Pancreas (tissue), 10 donors: ENCODE measurements at regions of chr12 and their contacts with region 1.

Region 1: GRCh38 chr12:54993161-54993835 is 8.7 kb upstream of the TESPA1 start:
- DNase-seq: peak in 4 of 6 donors; percentile 17 to 61 (median 28)
- ATAC-seq: peak; percentile 76 to 94 (median 88)
- H3K4me3 ChIP-seq: no peak overlapping the region
- H3K27ac ChIP-seq: no peak overlapping the region
- H3K4me1 ChIP-seq: no peaks in the 10 kb centered on the region
- H3K27me3 ChIP-seq: no peaks in the 10 kb centered on the region
- CTCF ChIP-seq: peak; percentile 71 to 87 (median 82)

Region 2: DNA sequence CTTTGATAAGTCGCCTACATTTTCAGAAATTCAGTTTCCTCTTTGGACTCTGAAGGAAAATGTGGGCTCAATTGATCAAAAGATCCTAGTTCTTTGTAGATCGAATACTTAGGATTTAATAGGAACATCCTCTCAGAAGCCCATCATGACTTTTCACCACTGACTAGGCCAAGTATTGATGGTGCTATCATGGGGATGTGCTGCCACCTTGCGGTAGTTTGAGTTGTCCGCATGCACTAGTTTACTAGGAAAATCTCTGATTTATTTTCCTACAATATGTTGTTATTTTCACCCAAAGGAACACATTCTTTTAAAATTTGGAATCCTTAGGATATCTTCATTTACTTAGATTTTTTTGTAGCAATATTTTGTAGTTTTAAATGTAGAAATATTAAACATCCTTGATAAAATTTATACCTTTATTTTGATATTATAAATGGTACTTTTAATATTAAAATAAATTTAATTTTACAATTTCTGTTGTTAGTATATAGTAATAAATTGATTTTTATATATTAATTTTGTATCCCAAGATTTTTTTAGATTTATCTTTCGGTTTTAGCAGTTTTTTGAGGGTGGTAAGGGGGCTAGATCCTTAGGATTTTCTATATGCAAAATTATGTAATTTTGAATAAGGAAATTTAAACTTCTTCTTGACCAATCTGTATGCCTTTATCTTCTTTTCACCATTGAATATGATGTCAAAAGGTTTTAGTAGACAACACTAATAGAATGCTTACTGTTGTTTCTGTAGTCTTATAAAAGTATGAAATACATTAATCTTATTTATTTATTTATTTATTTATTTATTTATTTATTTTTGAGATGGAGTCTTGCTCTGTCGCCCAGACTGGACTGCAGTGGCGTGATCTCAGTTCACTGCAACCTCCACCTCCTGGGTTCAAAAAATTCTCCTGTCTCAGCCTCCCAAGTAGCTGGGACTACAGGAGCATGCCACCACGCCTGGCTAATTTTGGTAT is 80.0 kb after region 1 on chr12:
- intact Hi-C with region 1: loop called in 2 of 3 experiments (anchors 5 to 10 kb)
- DNase-seq: peak; percentile 41 to 80 (median 57)
- ATAC-seq: peak; percentile 81 to 93 (median 91)
- H3K4me3 ChIP-seq: no peak overlapping the region
- H3K27ac ChIP-seq: no peak overlapping the region
- H3K4me1 ChIP-seq: no peaks in the 10 kb centered on the region
- H3K27me3 ChIP-seq: peaks cover 0 to 4% (median 2%) of the 10 kb centered on the region in 4 donors
- CTCF ChIP-seq: peak; percentile 59 to 69 (median 66)

Region 3: GRCh38 chr12:55142669-55143565 is 149.6 kb after region 1 on chr12:
- intact Hi-C with region 1: loop called in 1 of 3 experiments (anchors 10 kb)
- DNase-seq: peak in 2 of 6 donors; percentile 24 to 30
- ATAC-seq: peak in 3 of 4 donors; percentile 49 to 66 (median 64)
- H3K4me3 ChIP-seq: no peak overlapping the region
- H3K27ac ChIP-seq: no peak overlapping the region
- H3K4me1 ChIP-seq: no peaks in the 10 kb centered on the region
- H3K27me3 ChIP-seq: no peaks in the 10 kb centered on the region
- CTCF ChIP-seq: peak; percentile 43 to 59 (median 50)

Region 4: GRCh38 chr12:55320201-55320600 is 326.9 kb after region 1 on chr12:
- intact Hi-C with region 1: no loop called
- DNase-seq: no peak
- ATAC-seq: no peak
- H3K4me3 ChIP-seq: no peak overlapping the region
- H3K27ac ChIP-seq: no peak overlapping the region
- H3K4me1 ChIP-seq: no peaks in the 10 kb centered on the region
- H3K27me3 ChIP-seq: no peaks in the 10 kb centered on the region
- CTCF ChIP-seq: no peak